GM12878 (cell line): ENCODE measurements at regions of chr12 and their contacts with region 1.

Region 1: GRCh38 chr12:51270067-51270970 is at the start of gene SMAGP:
- DNase-seq: no peak
- ATAC-seq: peak; percentile 90
- H3K4me3 ChIP-seq: peak within 1 kb of the TSS; percentile 65
- H3K27ac ChIP-seq: no peak within 1 kb of the TSS
- H3K4me1 ChIP-seq: peaks cover 6% of the 10 kb centered on the region
- H3K27me3 ChIP-seq: peaks cover 1 to 6% of the 10 kb centered on the region in 2 experiments; a peak in 2 of 4 replicates
- CTCF ChIP-seq: peak in 1 of 3 experiments; percentile 13; a peak in 1 of 6 replicates
- EP300 ChIP-seq: no peak
- POLR2A ChIP-seq: no peak
- RAD21 ChIP-seq: no peak
- polyA plus RNA-seq, gene SMAGP: 5.3 to 6.3 TPM

Region 2: DNA sequence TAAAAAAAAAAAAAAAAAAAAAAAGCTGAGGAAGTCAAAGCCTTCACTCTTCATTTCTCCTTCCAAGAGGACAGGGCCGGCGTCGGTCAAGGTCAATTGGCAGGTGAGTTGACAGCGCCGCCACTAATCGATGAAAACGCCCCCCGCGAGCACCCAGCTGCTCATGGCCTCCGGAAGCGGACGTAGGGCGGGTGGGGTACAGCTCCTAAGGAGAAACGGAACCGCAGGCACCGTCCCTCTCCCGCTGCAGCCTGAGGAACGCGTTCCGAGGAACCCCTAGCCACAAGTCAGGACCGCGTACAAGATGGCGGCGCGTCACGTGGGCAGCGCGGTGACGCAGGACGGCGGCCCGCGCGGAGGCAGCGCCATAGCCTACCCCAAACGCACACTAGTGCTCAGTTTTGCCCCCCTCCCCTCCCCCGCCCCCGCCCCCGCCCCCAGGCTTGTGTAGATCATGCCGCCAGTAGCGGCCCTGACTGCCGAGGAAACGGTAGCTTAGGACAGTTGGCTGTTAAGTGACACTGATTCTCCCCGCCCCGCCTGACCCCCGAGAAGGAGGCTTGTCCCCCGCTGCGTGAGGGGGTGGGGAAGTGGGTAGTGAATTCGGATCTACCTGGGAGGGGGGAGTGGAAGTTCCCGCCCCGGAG is 506.6 kb before region 1 on chr12 and contains the start of gene ATF1:
- CTCF ChIA-PET with region 1: no interaction called
- POLR2A ChIA-PET with region 1: no interaction called
- RAD21 ChIA-PET with region 1: no interaction called
- SMC1A ChIA-PET with region 1: no interaction called
- in situ Hi-C with region 1: no loop called
- intact Hi-C with region 1: no loop called
- DNase-seq: peak; percentile 73
- ATAC-seq: peak; percentile 85
- H3K4me3 ChIP-seq: peak within 1 kb of the TSS; percentile 96
- H3K27ac ChIP-seq: peak within 1 kb of the TSS; percentile 97
- H3K4me1 ChIP-seq: peaks cover 4% of the 10 kb centered on the region; the same call in 1 of the 2 replicates
- H3K27me3 ChIP-seq: no peaks in the 10 kb centered on the region
- CTCF ChIP-seq: no peak
- EP300 ChIP-seq: 0 out of 4 replicates have a peak, but pooled peaks of 1 of the 2 experiments have one; percentile 14
- POLR2A ChIP-seq: peak; percentile 95
- RAD21 ChIP-seq: no peak
- polyA plus RNA-seq, gene ATF1: 15.4 to 17.0 TPM

Region 3: DNA sequence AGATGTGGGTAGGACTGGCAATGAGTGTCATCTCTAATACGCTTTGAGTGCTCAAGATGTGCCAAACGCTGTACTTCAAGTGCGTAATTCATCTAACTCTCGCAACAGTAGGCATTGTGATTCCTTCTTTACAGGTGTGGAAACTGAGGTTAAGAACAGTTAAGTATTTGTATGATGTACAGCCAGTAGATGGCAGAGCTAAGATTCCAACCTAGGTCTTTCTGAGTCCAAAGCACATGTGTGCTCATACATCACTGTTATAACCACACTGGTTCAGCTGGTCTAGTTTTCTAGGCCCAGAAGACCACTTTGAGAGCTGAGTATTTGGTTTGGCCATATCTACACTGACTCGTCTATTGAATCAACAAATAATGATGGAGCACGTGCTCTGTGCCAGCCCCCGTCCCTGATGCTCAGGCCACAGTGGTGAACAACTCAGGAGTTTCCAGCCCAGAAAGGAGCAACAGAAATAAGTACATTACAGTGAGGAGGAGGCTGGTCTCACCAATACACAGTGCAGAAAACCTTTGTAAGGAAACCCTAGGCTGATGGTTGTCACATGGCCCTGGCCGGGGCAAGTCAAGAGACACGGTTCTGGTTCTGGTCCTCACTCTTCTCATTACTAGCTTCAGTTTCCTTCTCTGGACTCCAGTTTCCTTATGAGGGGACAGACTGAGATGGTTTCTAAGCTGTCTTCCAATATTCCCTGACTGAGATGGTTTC is 251.4 kb after region 1 on chr12:
- CTCF ChIA-PET with region 1: no interaction called
- POLR2A ChIA-PET with region 1: no interaction called
- RAD21 ChIA-PET with region 1: no interaction called
- SMC1A ChIA-PET with region 1: no interaction called
- in situ Hi-C with region 1: no loop called
- intact Hi-C with region 1: loop called (anchors 10 kb)
- DNase-seq: no peak
- ATAC-seq: no peak
- H3K4me3 ChIP-seq: no peak overlapping the region
- H3K27ac ChIP-seq: no peak overlapping the region
- H3K4me1 ChIP-seq: peaks cover 8% of the 10 kb centered on the region
- H3K27me3 ChIP-seq: 0 out of 4 replicates have a peak, but pooled peaks cover 0 to 2% of the 10 kb centered on the region in 2 experiments
- CTCF ChIP-seq: 0 out of 6 replicates have a peak, but pooled peaks of 1 of the 3 experiments have one; percentile 10
- EP300 ChIP-seq: no peak
- POLR2A ChIP-seq: no peak
- RAD21 ChIP-seq: no peak